ENCODE measurements at regions of chr19 and their contacts with region 1.

Region 1: DNA sequence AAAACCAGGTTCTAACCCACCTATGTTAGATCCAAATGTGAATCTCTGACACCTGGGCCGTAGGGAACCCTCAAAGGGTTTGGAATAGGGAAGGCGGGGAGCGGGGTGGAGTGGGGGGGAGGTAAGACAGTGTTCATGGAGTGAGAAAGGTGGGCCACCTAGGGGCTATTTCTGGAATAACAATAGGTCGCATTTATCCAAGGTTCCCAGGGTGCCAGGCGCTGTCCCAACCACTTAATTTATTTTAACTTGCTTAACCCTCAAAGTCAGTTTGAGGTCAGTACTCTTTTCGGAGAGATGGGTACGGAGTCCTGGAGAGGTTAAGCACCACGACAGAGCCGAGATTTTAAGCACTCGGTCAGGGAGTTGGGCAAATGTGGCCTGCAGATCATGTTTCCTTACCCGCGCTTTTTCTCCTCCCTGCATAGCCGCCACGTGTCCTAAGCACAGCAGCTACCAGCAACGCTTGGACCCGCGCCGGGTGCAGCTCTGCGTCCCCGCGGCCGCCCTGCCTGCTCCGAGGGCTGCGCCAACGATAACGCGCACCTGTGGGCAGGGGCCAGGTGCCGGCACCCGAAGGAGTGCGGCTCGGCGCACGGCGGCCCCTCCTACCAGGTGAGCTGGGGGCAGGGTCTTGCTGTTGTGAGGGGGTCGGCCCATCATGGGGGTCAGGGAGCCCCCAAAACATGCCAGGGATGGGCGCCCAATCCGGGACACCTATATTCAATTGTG is 25.0 kb upstream of the FXYD3 start:
- DNase-seq: peak in 1 of 2 experiments; percentile 80
- H3K4me3 ChIP-seq: peak overlapping the region; percentile 13 to 45 (median 36); a peak in 7 of 8 replicates
- H3K27ac ChIP-seq: no peak overlapping the region
- H3K4me1 ChIP-seq: peaks cover 3 to 14% (median 6%) of the 10 kb centered on the region in 4 experiments; a peak in 6 of 7 replicates
- H3K27me3 ChIP-seq: no peaks in the 10 kb centered on the region
- CTCF ChIP-seq: peak; percentile 38 to 49 (median 40)
- EP300 ChIP-seq: no peak
- POLR2A ChIP-seq: 0 out of 3 replicates have a peak, but pooled peaks of 1 of the 2 experiments have one; percentile 19
- RAD21 ChIP-seq: peak; percentile 52 to 59

Region 2: DNA sequence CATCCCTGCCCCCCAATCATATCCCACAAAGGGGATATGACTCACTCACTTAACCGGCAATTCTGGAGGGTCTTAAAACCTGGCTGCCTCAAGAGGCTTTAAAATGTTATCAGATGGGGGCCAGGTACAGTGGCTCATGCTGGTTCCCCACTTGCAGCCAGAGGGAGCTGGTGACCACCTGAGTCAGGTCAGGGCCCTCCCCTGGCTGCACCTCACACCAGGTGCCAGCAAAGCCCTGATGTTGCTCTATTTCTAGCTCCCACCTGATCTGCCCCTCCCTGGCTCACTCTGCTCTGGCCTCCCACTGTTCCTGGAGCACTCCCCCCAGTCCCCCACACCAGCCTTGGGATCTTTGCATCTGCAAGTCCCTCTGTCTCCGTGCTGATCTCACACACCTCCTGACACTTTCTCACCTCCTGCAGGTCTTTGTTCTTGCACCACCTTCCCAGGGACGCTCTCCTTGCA is 34.9 kb before region 1 on chr19:
- CTCF ChIA-PET with region 1: interaction called, 56 read pairs
- POLR2A ChIA-PET with region 1: interaction called, 5 read pairs
- DNase-seq: peak; percentile 75
- H3K4me3 ChIP-seq: 0 out of 8 replicates have a peak overlapping the region, but pooled peaks of 1 of the 4 experiments have one; percentile 26
- H3K27ac ChIP-seq: no peak overlapping the region
- H3K4me1 ChIP-seq: peaks cover 0 to 11% (median 2%) of the 10 kb centered on the region in 4 experiments; a peak in 5 of 7 replicates
- H3K27me3 ChIP-seq: no peaks in the 10 kb centered on the region
- CTCF ChIP-seq: peak; percentile 83 to 91 (median 89)
- EP300 ChIP-seq: no peak
- POLR2A ChIP-seq: no peak
- RAD21 ChIP-seq: peak; percentile 67 to 72

Region 3: GRCh38 chr19:35114353-35115176 is 23.9 kb after region 1 on chr19:
- CTCF ChIA-PET with region 1: interaction called, 11 read pairs
- POLR2A ChIA-PET with region 1: interaction called, 5 read pairs
- DNase-seq: peak; percentile 73 to 99
- H3K4me3 ChIP-seq: peak overlapping the region in 3 of 4 experiments; percentile 23 to 56 (median 31); a peak in 5 of 8 replicates
- H3K27ac ChIP-seq: no peak overlapping the region
- H3K4me1 ChIP-seq: peaks cover 0 to 23% (median 14%) of the 10 kb centered on the region in 4 experiments; a peak in 6 of 7 replicates
- H3K27me3 ChIP-seq: peaks cover 0 to 2% (median 0%) of the 10 kb centered on the region in 4 experiments; a peak in 1 of 7 replicates
- CTCF ChIP-seq: peak; percentile 92 to 99 (median 94)
- EP300 ChIP-seq: no peak
- POLR2A ChIP-seq: no peak
- RAD21 ChIP-seq: peak; percentile 86 to 91